ENCODE measurements at regions of chr11 and their contacts with region 1.

Region 1: DNA sequence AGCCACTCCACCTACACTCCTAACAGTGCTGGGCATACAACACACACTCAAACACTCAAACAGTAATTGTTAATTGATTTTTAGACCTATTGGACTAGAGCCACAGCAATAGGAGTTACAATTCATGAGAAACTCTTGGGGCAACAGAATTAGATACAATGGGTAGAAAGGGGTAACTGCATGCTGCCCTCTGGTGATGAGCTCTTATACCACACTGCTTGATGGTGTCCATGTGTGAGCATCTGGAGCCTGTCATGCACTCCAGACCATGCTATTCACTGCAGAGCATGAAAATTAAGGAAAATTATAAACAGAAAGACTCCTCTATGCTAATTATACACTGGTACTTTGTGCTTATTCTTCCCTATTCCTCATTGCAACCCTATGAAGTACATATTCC is 975.5 kb upstream of the CCDC90B start:
- DNase-seq: peak in 1 of 10 donors; percentile 43

Region 2: GRCh38 chr11:83827940-83828554 is 433.7 kb before region 1 on chr11:
- intact Hi-C with region 1: loop called (anchors 5 kb)
- DNase-seq: no peak

Region 3: DNA sequence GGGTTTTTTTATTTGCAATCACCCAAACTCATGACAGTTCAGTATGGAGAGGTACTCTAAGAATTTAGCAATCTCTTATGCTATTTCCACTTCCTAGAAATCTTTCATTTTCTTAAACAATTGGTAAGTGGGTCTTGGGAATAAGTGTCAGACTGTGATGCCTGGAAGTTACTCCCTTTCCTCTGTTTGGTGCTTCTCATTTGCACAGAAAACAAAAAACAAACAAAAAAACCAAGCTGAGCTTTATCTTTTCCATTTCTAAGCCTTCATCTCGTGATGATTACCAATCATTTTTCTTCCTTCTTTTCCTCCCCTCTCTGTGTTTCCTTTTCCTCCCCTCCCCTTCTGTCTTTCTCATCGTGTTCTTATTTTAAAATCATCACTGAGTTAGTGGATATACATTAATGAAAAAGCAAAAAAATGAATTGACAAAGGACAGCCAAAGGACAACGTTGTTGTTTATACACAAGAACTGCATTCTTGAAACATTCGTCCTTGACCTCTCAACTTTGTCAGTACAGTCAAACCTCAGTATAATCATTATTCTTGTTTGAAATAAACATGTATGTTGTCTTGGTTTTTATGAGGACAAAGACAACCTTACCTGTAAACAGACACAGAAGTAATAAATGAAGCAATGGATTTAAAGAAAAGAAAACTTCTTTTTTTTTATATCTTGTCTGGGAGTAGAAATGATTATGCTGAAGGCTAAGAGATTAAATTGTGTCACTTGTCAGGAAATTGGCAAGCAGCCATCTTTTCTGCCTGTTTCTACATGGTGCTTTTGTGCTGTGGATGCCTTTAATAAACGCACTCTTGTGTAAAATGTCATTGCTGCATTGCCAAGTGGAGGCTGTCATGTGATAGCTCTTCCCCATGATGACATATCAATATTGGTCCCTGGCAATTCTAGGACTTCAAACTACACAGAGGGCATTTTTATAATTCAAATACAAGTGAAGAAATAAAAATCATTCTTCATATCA is 172.3 kb before region 1 on chr11:
- intact Hi-C with region 1: loop called (anchors 5 kb)
- DNase-seq: peak in 4 of 10 donors; percentile 19 to 63 (median 32)

Region 4: GRCh38 chr11:84136926-84137325 is 124.8 kb before region 1 on chr11:
- intact Hi-C with region 1: loop called (anchors 10 kb)
- DNase-seq: no peak

Region 5: GRCh38 chr11:84173078-84173477 is 88.6 kb before region 1 on chr11:
- intact Hi-C with region 1: no loop called
- DNase-seq: no peak

Region 6: GRCh38 chr11:84626256-84626655 is 364.5 kb after region 1 on chr11:
- intact Hi-C with region 1: no loop called
- DNase-seq: no peak

Region 7: GRCh38 chr11:84763931-84764330 is 502.2 kb after region 1 on chr11:
- intact Hi-C with region 1: no loop called
- DNase-seq: no peak

Measured in posterior cingulate gyrus (tissue), 11 donors.